ENCODE measurements at regions of chr15 and their contacts with region 1.

Region 1: GRCh38 chr15:31483053-31483985 is 156.7 kb downstream of the KLF13 start:
- DNase-seq: peak; percentile 85
- H3K4me3 Mint-ChIP-seq: peak overlapping the region; percentile 95
- H3K27ac Mint-ChIP-seq: peak overlapping the region; percentile 98
- H3K4me1 Mint-ChIP-seq: peaks cover 66% of the 10 kb centered on the region
- H3K27me3 Mint-ChIP-seq: no peaks in the 10 kb centered on the region

Region 2: GRCh38 chr15:31357148-31357752 is 126.1 kb before region 1 on chr15:
- intact Hi-C with region 1: no loop called
- DNase-seq: peak; percentile 82
- H3K4me3 Mint-ChIP-seq: peak overlapping the region; percentile 81
- H3K27ac Mint-ChIP-seq: peak overlapping the region; percentile 92
- H3K4me1 Mint-ChIP-seq: peaks cover 81% of the 10 kb centered on the region
- H3K27me3 Mint-ChIP-seq: no peaks in the 10 kb centered on the region

Region 3: GRCh38 chr15:31472636-31473384 is 10.5 kb before region 1 on chr15:
- intact Hi-C with region 1: loop called (anchors 1 kb)
- DNase-seq: peak; percentile 93
- H3K4me3 Mint-ChIP-seq: peak overlapping the region; percentile 73
- H3K27ac Mint-ChIP-seq: peak overlapping the region; percentile 90
- H3K4me1 Mint-ChIP-seq: peaks cover 37% of the 10 kb centered on the region
- H3K27me3 Mint-ChIP-seq: no peaks in the 10 kb centered on the region

Measured in activated CD4-positive, alpha-beta T cell treated with anti-CD3 and anti-CD28 coated beads, Interleukin-2, amount 10 ng/mL, durations not matched to agents 24 days and 14 days (primary cell).